GM10248 (cell line): ENCODE measurements at regions of chr1 and their contacts with region 1.

Region 1: DNA sequence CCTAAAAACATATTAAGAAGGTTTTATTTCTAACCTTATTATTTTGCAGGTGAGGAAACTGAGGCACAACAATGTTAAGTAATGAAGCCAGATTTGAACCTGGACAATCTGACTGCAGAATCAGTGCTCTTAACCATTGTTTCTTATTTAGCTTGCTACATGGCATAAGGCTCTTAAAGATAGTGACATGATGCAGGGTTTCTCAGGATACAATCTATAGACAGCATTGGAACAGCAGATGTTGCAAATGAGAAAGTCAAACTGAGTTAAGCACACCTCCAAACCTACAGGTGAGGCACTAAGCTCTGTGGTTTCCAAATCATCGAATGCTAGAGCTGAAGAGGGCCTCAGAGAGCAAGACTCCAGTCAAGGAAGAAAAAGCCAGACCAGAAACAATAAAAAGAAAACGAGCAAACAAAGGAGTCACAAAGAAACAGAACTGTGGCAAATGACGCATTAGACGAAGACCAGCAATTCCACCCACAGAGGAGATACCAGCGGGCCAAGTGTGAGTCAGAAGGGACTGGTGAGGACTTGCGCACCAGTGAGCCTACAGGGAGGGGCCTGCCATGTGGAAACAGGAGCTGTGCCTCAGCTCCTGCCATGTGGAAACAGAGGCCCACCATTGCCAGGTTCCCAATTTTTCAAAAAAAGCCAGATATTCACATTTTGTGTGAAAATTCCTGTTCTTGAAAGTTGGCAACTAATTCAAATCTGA is 14.4 kb downstream of the CD58 start:
- DNase-seq: no peak
- CTCF ChIP-seq: peak; percentile 23

Region 2: GRCh38 chr1:116540088-116540487 is 16.4 kb before region 1 on chr1:
- CTCF ChIA-PET with region 1: interaction called, 29 read pairs
- POLR2A ChIA-PET with region 1: interaction called, 4 read pairs
- DNase-seq: peak; percentile 56
- CTCF ChIP-seq: no peak

Region 3: GRCh38 chr1:116587496-116588227 is 31.2 kb after region 1 on chr1:
- CTCF ChIA-PET with region 1: no interaction called
- POLR2A ChIA-PET with region 1: no interaction called
- DNase-seq: no peak
- CTCF ChIP-seq: no peak